Endothelial cell of umbilical vein (primary cell): ENCODE measurements at regions of chr18 and their contacts with region 1.

Region 1: GRCh38 chr18:58263055-58263957 is 219.3 kb downstream of the NEDD4L start:
- DNase-seq: peak; percentile 86
- H3K4me3 ChIP-seq: peak overlapping the region in 2 of 3 experiments; percentile 7 to 50
- H3K27ac ChIP-seq: peak overlapping the region; percentile 88
- H3K4me1 ChIP-seq: peaks cover 22% of the 10 kb centered on the region
- H3K27me3 ChIP-seq: no peaks in the 10 kb centered on the region
- CTCF ChIP-seq: no peak
- POLR2A ChIP-seq: no peak

Region 2: GRCh38 chr18:58247363-58247834 is 15.9 kb before region 1 on chr18:
- CTCF ChIA-PET with region 1: interaction called, 5 read pairs
- POLR2A ChIA-PET with region 1: no interaction called
- dilution Hi-C with region 1: no loop called
- intact Hi-C with region 1: loop called (anchors 2 kb)
- DNase-seq: peak; percentile 83
- H3K4me3 ChIP-seq: peak overlapping the region in 2 of 3 experiments; percentile 4 to 20
- H3K27ac ChIP-seq: peak overlapping the region; percentile 64
- H3K4me1 ChIP-seq: peaks cover 29% of the 10 kb centered on the region
- H3K27me3 ChIP-seq: no peaks in the 10 kb centered on the region
- CTCF ChIP-seq: no peak
- POLR2A ChIP-seq: no peak

Region 3: DNA sequence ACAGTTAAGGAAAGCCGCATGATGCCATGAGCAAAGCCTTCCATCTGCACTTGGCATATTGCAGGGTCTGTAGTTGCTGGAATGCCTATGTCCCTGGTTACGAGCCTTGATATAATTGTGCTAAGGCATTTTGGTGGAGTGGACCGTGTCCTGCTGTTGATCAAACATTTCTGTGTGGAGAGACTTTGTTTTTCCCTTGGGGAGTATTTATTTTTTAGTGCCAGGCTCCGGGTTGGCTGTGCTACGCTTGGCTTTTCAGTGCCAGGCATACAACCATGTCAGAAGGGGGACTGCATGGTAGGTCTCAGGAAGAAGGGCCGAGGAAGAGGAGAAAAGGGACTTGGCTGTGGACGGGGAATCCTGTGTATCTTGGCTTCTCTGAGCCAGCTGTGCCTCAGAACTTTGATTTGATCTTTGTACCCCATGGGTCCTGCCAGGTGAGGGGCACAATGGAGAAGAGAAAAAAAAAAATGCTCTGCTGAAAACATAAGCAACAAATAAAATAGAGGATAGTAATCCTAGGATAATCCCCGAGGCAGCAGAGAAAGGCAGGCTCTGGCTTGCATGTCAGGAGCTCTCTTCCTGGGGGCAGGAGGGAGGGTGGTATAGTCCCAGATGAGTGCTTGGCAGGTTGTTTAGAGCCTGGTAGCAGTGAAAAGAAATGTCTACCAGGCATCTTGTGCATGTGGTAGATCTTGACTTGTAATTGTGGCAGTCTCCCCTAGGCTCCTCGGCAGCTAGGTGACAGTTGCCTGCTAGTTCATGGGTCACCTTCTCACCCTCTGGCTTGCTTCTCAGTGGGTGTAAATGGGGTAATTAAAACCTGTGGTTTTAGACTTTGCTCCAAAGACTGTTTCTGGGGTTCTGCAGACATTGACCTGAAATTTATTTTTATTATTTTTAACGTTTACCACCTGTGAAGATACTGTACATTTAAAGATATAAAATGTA is 13.8 kb after region 1 on chr18:
- CTCF ChIA-PET with region 1: interaction called, 3 read pairs
- POLR2A ChIA-PET with region 1: no interaction called
- dilution Hi-C with region 1: no loop called
- intact Hi-C with region 1: loop called (anchors 1 kb)
- DNase-seq: no peak
- H3K4me3 ChIP-seq: no peak overlapping the region
- H3K27ac ChIP-seq: no peak overlapping the region
- H3K4me1 ChIP-seq: peaks cover 11% of the 10 kb centered on the region
- H3K27me3 ChIP-seq: no peaks in the 10 kb centered on the region
- CTCF ChIP-seq: no peak
- POLR2A ChIP-seq: no peak